ENCODE measurements at regions of chr5 and their contacts with region 1.

Region 1: GRCh38 chr5:119355685-119356611 is at the start of gene TNFAIP8:
- DNase-seq: no peak
- H3K4me3 ChIP-seq: peak within 1 kb of the TSS; percentile 59 to 82 (median 74)
- H3K27ac ChIP-seq: peak within 1 kb of the TSS; percentile 76 to 89 (median 82)
- H3K4me1 ChIP-seq: peaks cover 15 to 58% (median 53%) of the 10 kb centered on the region in 4 donors
- H3K27me3 ChIP-seq: no peaks in the 10 kb centered on the region
- CTCF ChIP-seq: no peak
- EP300 ChIP-seq: no peak
- POLR2A ChIP-seq: no peak
- total RNA-seq, gene TNFAIP8: 20.2 to 26.2 (median 22.5) TPM

Region 2: DNA sequence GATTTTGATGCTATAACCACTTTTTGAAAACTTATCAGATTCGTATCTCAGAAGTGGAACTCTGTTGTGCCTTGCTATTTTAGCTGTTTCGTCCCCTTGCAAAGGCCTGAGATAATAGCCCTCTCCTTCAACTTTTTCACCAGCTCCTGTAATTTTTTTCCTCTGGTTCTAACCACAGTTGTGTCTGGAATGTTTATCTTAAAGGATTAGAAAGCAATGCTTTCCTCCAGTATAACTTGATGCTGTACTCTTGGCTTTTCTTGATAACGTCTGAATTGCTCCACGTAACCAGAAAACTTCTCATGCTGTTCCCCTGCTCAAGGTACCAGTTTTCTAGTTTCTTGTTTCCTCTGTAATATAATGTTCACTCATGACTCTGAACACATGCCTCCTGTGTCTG is 577.0 kb before region 1 on chr5:
- intact Hi-C with region 1: no loop called
- DNase-seq: no peak
- H3K4me3 ChIP-seq: no peak overlapping the region
- H3K27ac ChIP-seq: no peak overlapping the region
- H3K4me1 ChIP-seq: no peaks in the 10 kb centered on the region
- H3K27me3 ChIP-seq: no peaks in the 10 kb centered on the region
- CTCF ChIP-seq: no peak
- EP300 ChIP-seq: no peak
- POLR2A ChIP-seq: no peak

Region 3: GRCh38 chr5:119397518-119398380 is 41.8 kb after region 1 on chr5:
- intact Hi-C with region 1: loop called (anchors 5 kb)
- DNase-seq: no peak
- H3K4me3 ChIP-seq: no peak overlapping the region
- H3K27ac ChIP-seq: no peak overlapping the region
- H3K4me1 ChIP-seq: peaks cover 11 to 52% (median 38%) of the 10 kb centered on the region in 4 donors
- H3K27me3 ChIP-seq: no peaks in the 10 kb centered on the region
- CTCF ChIP-seq: no peak
- EP300 ChIP-seq: no peak
- POLR2A ChIP-seq: no peak

Region 4: GRCh38 chr5:119655061-119655460 is 299.1 kb after region 1 on chr5:
- intact Hi-C with region 1: no loop called
- DNase-seq: no peak
- H3K4me3 ChIP-seq: no peak overlapping the region
- H3K27ac ChIP-seq: no peak overlapping the region
- H3K4me1 ChIP-seq: no peaks in the 10 kb centered on the region
- H3K27me3 ChIP-seq: no peaks in the 10 kb centered on the region
- CTCF ChIP-seq: no peak
- EP300 ChIP-seq: no peak
- POLR2A ChIP-seq: no peak

Measured in esophagus muscularis mucosa (tissue), 4 donors.